ENCODE measurements at regions of chr13 and their contacts with region 1.

Region 1: DNA sequence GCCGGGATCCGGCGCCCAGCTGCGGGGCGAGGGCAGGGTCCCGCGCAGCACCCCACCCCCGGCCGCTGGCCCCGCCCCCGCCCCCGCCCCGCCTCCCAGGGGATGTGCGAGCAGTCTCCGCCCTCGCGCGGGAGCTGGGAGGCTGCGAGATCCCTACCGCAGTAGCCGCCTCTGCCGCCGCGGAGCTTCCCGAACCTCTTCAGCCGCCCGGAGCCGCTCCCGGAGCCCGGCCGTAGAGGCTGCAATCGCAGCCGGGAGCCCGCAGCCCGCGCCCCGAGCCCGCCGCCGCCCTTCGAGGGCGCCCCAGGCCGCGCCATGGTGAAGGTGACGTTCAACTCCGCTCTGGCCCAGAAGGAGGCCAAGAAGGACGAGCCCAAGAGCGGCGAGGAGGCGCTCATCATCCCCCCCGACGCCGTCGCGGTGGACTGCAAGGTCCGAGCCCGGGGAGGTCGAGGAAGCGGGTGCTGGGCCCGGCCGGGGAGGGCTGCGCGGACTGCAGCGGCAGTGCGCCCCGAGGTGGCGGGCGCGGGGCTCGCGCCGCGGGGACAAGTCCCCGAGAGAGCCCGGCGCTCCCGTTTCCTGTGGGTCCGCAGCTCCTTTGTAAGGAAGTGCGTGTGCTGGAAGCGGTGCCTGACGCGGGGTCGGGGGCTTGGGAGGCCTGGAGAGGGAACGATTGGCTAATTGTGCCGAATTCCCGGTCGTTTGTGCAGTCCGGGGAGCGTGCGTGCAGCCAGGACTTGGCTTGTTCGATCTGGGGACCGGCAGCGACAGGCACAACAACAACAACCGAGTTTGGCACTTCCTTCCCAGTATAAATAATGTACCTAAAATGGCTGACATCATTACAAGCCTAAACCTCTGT is at the start of gene ITM2B:
- DNase-seq: peak; percentile 70
- ATAC-seq: peak; percentile 81
- H3K4me3 Mint-ChIP-seq: peak within 1 kb of the TSS; percentile 94
- H3K27ac Mint-ChIP-seq: peak within 1 kb of the TSS; percentile 89
- H3K4me1 Mint-ChIP-seq: peaks cover 46% of the 10 kb centered on the region
- H3K27me3 Mint-ChIP-seq: no peaks in the 10 kb centered on the region
- total RNA-seq, gene ITM2B: 243 to 244 TPM

Region 2: DNA sequence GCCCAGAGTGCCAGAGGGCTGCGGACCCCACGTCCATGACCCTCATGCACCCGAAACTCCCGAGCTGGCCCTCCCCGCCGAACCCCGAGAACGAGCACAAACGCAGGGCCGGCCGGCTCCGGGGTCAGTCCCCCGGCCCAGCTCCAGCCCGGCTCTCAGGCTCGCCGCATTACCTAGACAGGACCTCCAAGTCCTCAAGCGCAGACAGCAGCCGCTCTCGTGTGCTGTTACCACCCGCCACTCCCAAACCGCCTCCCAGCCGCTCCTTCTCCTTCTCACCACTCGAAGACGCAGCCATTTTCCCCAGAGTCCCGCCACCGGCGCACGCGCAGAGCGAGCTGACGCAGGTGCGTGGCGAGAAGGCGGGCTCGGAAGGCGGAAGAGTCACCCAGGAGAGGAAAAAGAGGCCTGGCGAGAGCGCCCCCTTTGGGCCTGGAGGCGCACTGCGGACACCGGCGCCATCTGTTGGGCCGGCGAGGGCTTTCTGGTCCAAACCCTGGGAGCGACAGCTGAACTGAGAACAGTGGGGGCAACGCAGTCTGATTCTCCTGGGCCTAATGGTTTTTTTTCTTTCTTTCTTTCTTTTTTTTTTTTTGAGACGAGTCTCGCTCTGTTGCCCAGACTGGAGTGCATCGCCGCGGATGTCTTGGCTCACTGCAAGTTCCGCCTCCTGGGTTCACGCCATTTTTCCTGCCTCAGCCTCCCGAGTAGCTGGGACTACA is 138.3 kb before region 1 on chr13 and contains the start of gene MED4:
- CTCF ChIA-PET with region 1: interaction called, 10 read pairs
- POLR2A ChIA-PET with region 1: interaction called, 13 read pairs
- DNase-seq: peak; percentile 98
- ATAC-seq: peak; percentile 97
- H3K4me3 Mint-ChIP-seq: peak within 1 kb of the TSS; percentile 96
- H3K27ac Mint-ChIP-seq: peak within 1 kb of the TSS; percentile 95
- H3K4me1 Mint-ChIP-seq: peaks cover 40% of the 10 kb centered on the region
- H3K27me3 Mint-ChIP-seq: peaks cover 3% of the 10 kb centered on the region
- total RNA-seq, gene MED4: 65.3 to 65.5 TPM

Region 3: DNA sequence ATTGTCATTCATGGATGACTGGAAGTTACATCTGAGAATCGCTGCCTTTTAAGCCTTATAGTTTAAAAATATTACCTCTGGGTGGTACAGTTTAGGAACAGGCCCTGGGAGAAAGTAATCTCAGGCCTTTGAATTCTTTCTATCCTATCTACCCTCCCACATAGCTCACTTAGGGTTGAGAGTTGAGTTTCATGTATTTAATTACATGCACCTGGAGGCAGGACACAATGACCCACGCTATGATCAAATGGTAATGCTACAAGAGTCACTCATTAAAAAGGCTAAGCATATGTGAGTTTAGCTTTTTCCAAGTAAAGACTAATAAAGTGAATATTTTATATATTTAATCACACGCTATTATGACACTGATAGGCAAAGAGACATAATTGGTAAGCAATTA is 113.0 kb before region 1 on chr13:
- CTCF ChIA-PET with region 1: interaction called, 10 read pairs
- POLR2A ChIA-PET with region 1: interaction called, 3 read pairs
- DNase-seq: no peak
- ATAC-seq: no peak
- H3K4me3 Mint-ChIP-seq: no peak overlapping the region
- H3K27ac Mint-ChIP-seq: no peak overlapping the region
- H3K4me1 Mint-ChIP-seq: no peaks in the 10 kb centered on the region
- H3K27me3 Mint-ChIP-seq: peaks cover 10% of the 10 kb centered on the region

Region 4: DNA sequence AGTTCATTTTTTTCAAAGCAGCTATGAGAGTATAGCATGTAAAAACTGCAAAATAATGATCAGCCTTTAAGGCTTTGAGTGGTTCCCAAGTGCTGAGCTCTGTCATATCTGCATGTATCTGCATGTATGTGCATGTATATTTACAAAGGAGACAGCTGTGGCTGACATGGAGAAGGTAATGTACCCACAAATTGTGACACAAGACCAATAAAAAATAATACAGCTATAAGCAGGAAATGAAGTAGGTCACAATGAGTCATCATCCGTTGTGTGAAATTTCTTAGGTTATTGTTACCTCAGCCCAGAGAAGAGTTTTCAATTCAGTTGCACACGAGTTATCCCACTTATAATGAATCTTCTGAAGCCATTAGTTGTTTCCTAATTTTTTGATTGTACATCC is 77.4 kb before region 1 on chr13:
- CTCF ChIA-PET with region 1: interaction called, 16 read pairs
- POLR2A ChIA-PET with region 1: interaction called, 5 read pairs
- DNase-seq: peak; percentile 58
- ATAC-seq: peak; percentile 87
- H3K4me3 Mint-ChIP-seq: peak overlapping the region; percentile 38
- H3K27ac Mint-ChIP-seq: peak overlapping the region; percentile 92
- H3K4me1 Mint-ChIP-seq: peaks cover 74% of the 10 kb centered on the region
- H3K27me3 Mint-ChIP-seq: no peaks in the 10 kb centered on the region

Region 5: DNA sequence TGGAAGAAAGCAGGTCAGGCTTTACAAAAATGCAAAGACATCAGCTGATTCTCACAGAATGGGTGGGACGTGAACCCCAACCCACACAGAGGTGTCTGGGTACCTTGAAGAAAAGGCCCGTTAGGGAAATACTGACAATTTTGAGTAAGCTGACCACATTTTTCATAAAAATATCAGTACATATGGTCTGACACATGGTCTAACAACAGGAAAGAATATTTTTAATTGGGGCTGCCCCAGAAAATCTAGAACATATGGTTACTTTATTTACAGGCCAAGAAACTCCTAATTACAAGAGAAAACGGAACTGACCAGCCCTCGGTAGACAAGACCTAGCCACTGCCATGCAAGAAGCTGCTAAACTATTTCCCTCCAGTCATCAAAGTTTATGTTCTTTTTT is 49.0 kb before region 1 on chr13:
- CTCF ChIA-PET with region 1: interaction called, 10 read pairs
- POLR2A ChIA-PET with region 1: interaction called, 27 read pairs
- DNase-seq: no peak
- ATAC-seq: no peak
- H3K4me3 Mint-ChIP-seq: no peak overlapping the region
- H3K27ac Mint-ChIP-seq: peak overlapping the region; percentile 40
- H3K4me1 Mint-ChIP-seq: peaks cover 60% of the 10 kb centered on the region
- H3K27me3 Mint-ChIP-seq: no peaks in the 10 kb centered on the region

Region 6: DNA sequence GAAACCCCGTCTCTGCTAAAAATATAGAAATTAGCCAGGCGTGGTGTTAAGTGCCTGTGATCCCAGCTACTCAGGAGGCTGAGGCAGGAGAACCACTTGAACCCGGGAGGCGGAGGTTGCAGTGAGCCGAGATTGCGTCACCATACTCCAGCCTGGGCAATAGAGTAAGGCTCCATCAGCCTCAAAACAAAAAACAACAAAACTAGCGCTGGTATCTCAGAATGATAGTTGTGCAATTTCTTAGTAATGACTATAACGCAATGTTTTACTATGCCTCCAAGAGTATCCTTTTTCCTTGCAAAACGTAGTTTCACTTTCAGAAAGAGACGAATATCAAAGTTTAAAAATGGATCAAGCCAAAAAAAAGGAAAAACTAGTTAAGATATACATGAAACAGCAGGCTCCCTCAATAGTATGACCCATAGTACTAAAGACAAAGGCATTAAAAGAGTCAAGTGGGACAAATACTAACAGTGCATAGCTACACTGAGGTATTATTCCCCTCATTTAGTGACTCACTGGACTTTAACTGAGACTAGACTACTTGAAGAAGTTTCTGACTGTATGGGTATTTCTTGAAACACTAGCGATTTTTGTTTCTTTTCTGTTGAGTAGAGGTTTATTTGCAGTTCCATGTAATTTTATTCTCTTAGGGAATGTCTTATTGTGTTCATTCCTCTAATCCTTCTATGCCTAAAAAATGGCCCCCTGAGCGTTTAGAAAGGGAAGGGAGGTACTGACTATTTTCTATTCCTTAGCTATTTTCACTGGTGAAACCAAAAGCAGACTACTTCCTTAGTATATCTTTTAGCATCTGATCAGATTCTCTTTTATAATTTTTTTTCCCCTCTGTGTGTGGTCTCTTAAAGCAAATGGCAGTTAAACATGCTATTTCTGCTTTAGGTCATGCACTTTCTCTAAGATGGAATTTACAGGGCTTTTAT is 10.6 kb before region 1 on chr13:
- CTCF ChIA-PET with region 1: interaction called, 52 read pairs
- POLR2A ChIA-PET with region 1: interaction called, 30 read pairs
- DNase-seq: no peak
- ATAC-seq: peak; percentile 17
- H3K4me3 Mint-ChIP-seq: peak overlapping the region; percentile 44
- H3K27ac Mint-ChIP-seq: peak overlapping the region; percentile 67
- H3K4me1 Mint-ChIP-seq: peaks cover 41% of the 10 kb centered on the region
- H3K27me3 Mint-ChIP-seq: peaks cover under 1% of the 10 kb centered on the region

Region 7: DNA sequence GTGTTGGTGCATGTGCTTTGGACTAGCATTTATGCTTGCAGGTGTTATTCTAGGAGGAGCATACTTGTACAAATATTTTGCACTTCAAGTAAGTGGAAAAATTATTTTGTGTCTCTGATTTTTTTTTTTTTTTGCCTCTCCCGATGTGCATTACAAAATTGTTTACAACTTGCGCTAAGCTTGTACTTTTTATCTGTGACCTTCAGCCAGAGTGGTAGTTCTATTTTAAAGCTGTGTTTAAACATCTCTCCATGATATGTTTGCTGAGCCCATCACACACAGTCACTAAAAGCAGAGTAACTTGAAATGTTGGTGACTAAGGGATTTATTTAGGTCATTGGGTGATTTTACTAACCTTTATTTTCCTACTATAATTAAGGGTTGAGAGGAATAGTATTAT is 20.6 kb after region 1 on chr13:
- CTCF ChIA-PET with region 1: no interaction called
- POLR2A ChIA-PET with region 1: no interaction called
- DNase-seq: no peak
- ATAC-seq: no peak
- H3K4me3 Mint-ChIP-seq: no peak overlapping the region
- H3K27ac Mint-ChIP-seq: no peak overlapping the region
- H3K4me1 Mint-ChIP-seq: peaks cover 10% of the 10 kb centered on the region
- H3K27me3 Mint-ChIP-seq: no peaks in the 10 kb centered on the region

Region 8: GRCh38 chr13:48317511-48318376 is 84.5 kb after region 1 on chr13:
- CTCF ChIA-PET with region 1: no interaction called
- POLR2A ChIA-PET with region 1: no interaction called
- DNase-seq: no peak
- ATAC-seq: no peak
- H3K4me3 Mint-ChIP-seq: peak overlapping the region; percentile 28
- H3K27ac Mint-ChIP-seq: no peak overlapping the region
- H3K4me1 Mint-ChIP-seq: peaks cover 38% of the 10 kb centered on the region
- H3K27me3 Mint-ChIP-seq: no peaks in the 10 kb centered on the region

Region 9: GRCh38 chr13:48500652-48501197 is 267.4 kb after region 1 on chr13:
- CTCF ChIA-PET with region 1: no interaction called
- POLR2A ChIA-PET with region 1: no interaction called
- DNase-seq: no peak
- ATAC-seq: no peak
- H3K4me3 Mint-ChIP-seq: no peak overlapping the region
- H3K27ac Mint-ChIP-seq: no peak overlapping the region
- H3K4me1 Mint-ChIP-seq: peaks cover 94% of the 10 kb centered on the region
- H3K27me3 Mint-ChIP-seq: no peaks in the 10 kb centered on the region

Region 10: GRCh38 chr13:48573213-48574007 is 340.1 kb after region 1 on chr13:
- CTCF ChIA-PET with region 1: no interaction called
- POLR2A ChIA-PET with region 1: no interaction called
- DNase-seq: peak; percentile 17
- ATAC-seq: no peak
- H3K4me3 Mint-ChIP-seq: no peak overlapping the region
- H3K27ac Mint-ChIP-seq: peak overlapping the region; percentile 76
- H3K4me1 Mint-ChIP-seq: peaks cover 79% of the 10 kb centered on the region
- H3K27me3 Mint-ChIP-seq: peaks cover 6% of the 10 kb centered on the region

Measured in activated CD8-positive, alpha-beta T cell treated with anti-CD3 and anti-CD28 coated beads, Interleukin-2, amount 10 ng/mL, durations not matched to agents 7 days and 5 days (primary cell).